ENCODE measurements at regions of chr2 and their contacts with region 1.

Region 1: DNA sequence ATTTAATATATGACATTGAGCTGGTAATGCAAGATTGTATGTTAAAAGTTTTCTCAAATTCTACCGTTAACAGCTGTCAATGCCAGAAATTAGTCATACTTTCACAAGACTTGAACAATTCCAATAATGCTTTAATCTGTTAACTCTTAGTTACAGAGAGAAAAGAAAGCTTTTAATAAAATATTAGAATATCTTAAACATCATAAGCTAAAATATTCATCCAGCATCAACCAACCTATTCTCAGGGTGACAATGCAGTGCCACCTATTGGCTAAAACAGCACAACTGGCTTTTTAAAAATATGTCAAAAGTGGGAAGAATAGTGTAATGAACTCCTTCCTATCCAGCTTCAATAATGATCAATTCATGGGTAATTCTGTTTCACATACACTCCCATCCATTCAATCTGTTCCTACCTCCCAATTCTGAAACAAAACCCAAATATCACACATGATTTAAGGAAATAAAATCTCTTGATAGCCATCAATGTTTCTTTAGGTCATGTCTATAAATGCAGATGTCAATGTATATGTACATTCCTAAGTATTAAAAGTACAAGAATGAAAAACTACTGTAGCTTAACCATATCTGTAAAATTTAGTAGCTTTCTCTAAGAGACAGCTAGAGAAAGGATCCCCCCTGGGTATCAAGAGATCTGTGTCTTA is 79.8 kb upstream of the CCDC141 start:
- DNase-seq: peak in 3 of 9 experiments; percentile 4 to 47 (median 30)
- ATAC-seq: no peak
- H3K4me3 ChIP-seq: no peak overlapping the region
- H3K4me3 Mint-ChIP-seq: no peak overlapping the region
- H3K27ac ChIP-seq: no peak overlapping the region
- H3K27ac Mint-ChIP-seq: no peak overlapping the region
- H3K4me1 ChIP-seq: no peaks in the 10 kb centered on the region
- H3K4me1 Mint-ChIP-seq: no peaks in the 10 kb centered on the region
- H3K27me3 ChIP-seq: no peaks in the 10 kb centered on the region
- H3K27me3 Mint-ChIP-seq: no peaks in the 10 kb centered on the region
- CTCF ChIP-seq: peak; percentile 73

Region 2: GRCh38 chr2:178796079-178796677 is 333.5 kb before region 1 on chr2:
- CTCF ChIA-PET with region 1: interaction called, 7 read pairs
- POLR2A ChIA-PET with region 1: no interaction called
- intact Hi-C with region 1: loop called (anchors 1 to 2 kb)
- DNase-seq: peak in 2 of 9 experiments; percentile 17 to 47
- ATAC-seq: no peak
- H3K4me3 ChIP-seq: no peak overlapping the region
- H3K4me3 Mint-ChIP-seq: no peak overlapping the region
- H3K27ac ChIP-seq: no peak overlapping the region
- H3K27ac Mint-ChIP-seq: no peak overlapping the region
- H3K4me1 ChIP-seq: no peaks in the 10 kb centered on the region
- H3K4me1 Mint-ChIP-seq: no peaks in the 10 kb centered on the region
- H3K27me3 ChIP-seq: no peaks in the 10 kb centered on the region
- H3K27me3 Mint-ChIP-seq: no peaks in the 10 kb centered on the region
- CTCF ChIP-seq: peak; percentile 70

Region 3: DNA sequence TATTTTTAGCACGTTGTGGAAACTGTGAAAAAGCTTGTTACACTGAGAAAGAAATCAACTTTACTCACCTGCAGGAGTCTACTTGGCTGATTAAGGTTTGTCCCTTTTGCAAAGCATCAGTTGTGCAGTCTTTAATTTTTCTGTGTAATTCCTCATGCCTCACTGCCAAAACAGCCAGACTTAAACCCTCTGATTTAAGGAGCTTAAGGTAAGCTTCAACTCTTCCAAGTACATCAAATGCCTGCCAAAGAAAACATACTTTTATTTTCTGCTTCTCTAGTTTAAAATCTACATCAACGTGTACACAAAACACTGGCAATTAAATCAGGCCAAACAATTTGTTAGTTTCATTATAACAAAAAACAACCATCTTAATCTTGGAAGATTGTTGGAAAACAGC is 224.4 kb before region 1 on chr2:
- CTCF ChIA-PET with region 1: interaction called, 10 read pairs
- POLR2A ChIA-PET with region 1: no interaction called
- intact Hi-C with region 1: loop called in 1 of 2 experiments (anchors 5 kb)
- DNase-seq: no peak
- ATAC-seq: no peak
- H3K4me3 ChIP-seq: no peak overlapping the region
- H3K4me3 Mint-ChIP-seq: no peak overlapping the region
- H3K27ac ChIP-seq: no peak overlapping the region
- H3K27ac Mint-ChIP-seq: peak overlapping the region; percentile 20
- H3K4me1 ChIP-seq: no peaks in the 10 kb centered on the region
- H3K4me1 Mint-ChIP-seq: no peaks in the 10 kb centered on the region
- H3K27me3 ChIP-seq: no peaks in the 10 kb centered on the region
- H3K27me3 Mint-ChIP-seq: no peaks in the 10 kb centered on the region
- CTCF ChIP-seq: no peak

Region 4: DNA sequence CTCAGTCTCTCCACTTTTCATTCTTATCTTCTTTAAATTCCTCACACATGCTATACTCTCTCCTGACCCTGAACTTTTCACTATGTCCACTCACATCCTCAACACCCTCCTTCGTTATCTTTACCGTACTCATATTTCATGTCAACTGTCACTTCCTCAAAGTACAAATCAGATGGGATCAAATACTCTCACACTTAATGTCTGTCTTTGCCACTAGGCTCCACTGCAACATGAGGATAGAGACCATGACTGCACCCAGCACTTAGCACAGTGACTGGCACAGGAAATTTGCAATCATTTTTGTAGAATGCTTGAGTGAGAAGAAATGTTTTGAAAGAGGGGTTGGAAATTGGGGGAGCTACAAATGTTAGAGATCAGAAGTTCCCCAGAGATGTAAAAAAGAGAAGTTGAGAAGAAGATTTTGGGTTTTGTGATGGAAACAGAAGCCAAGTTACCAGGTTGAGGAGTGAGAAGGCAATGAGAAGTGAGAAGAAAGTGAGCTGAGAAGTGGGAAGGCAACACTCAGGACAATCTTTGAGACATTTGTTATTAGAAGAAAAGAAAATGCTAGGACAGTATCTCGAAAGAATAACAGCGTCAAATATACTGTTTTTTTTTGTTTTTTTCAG is 166.8 kb before region 1 on chr2:
- CTCF ChIA-PET with region 1: interaction called, 8 read pairs
- POLR2A ChIA-PET with region 1: no interaction called
- intact Hi-C with region 1: loop called in 1 of 2 experiments (anchors 1 kb)
- DNase-seq: peak in 1 of 9 experiments; percentile 9
- ATAC-seq: no peak
- H3K4me3 ChIP-seq: no peak overlapping the region
- H3K4me3 Mint-ChIP-seq: no peak overlapping the region
- H3K27ac ChIP-seq: no peak overlapping the region
- H3K27ac Mint-ChIP-seq: no peak overlapping the region
- H3K4me1 ChIP-seq: no peaks in the 10 kb centered on the region
- H3K4me1 Mint-ChIP-seq: no peaks in the 10 kb centered on the region
- H3K27me3 ChIP-seq: no peaks in the 10 kb centered on the region
- H3K27me3 Mint-ChIP-seq: no peaks in the 10 kb centered on the region
- CTCF ChIP-seq: no peak

Region 5: GRCh38 chr2:179354739-179355537 is 225.2 kb after region 1 on chr2:
- CTCF ChIA-PET with region 1: no interaction called
- POLR2A ChIA-PET with region 1: no interaction called
- intact Hi-C with region 1: no loop called
- DNase-seq: no peak
- ATAC-seq: no peak
- H3K4me3 ChIP-seq: no peak overlapping the region
- H3K4me3 Mint-ChIP-seq: no peak overlapping the region
- H3K27ac ChIP-seq: no peak overlapping the region
- H3K27ac Mint-ChIP-seq: no peak overlapping the region
- H3K4me1 ChIP-seq: no peaks in the 10 kb centered on the region
- H3K4me1 Mint-ChIP-seq: no peaks in the 10 kb centered on the region
- H3K27me3 ChIP-seq: no peaks in the 10 kb centered on the region
- H3K27me3 Mint-ChIP-seq: peaks cover 2% of the 10 kb centered on the region
- CTCF ChIP-seq: no peak

Region 6: DNA sequence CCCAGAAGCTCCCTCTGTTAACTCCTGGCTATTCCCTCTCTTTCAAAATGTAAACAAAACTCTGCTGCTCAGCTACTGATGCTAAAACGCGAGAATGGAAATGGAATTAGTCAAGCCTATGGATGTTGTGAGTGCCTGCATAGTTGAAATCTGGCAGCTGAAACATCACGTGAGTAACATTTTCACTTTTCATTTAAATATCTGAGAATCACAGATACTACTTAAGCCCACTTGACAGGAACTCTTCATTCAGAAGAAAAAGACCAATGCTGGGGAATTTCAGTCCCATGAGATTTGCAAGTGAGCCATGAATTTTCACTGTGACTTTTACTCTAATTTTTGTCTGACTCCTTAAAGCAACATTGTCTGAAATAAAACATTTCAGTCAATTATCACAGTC is 350.2 kb after region 1 on chr2:
- CTCF ChIA-PET with region 1: no interaction called
- POLR2A ChIA-PET with region 1: no interaction called
- intact Hi-C with region 1: no loop called
- DNase-seq: no peak
- ATAC-seq: no peak
- H3K4me3 ChIP-seq: no peak overlapping the region
- H3K4me3 Mint-ChIP-seq: no peak overlapping the region
- H3K27ac ChIP-seq: no peak overlapping the region
- H3K27ac Mint-ChIP-seq: no peak overlapping the region
- H3K4me1 ChIP-seq: no peaks in the 10 kb centered on the region
- H3K4me1 Mint-ChIP-seq: no peaks in the 10 kb centered on the region
- H3K27me3 ChIP-seq: no peaks in the 10 kb centered on the region
- H3K27me3 Mint-ChIP-seq: peaks cover 2% of the 10 kb centered on the region
- CTCF ChIP-seq: no peak

Measured in CD8-positive, alpha-beta T cell (primary cell).